ENCODE measurements at regions of chr17 and their contacts with region 1.

Region 1: GRCh38 chr17:21126645-21127510 is at the start of gene DHRS7B:
- DNase-seq: peak; percentile 97 to 98 (median 97)
- ATAC-seq: peak; percentile 92
- H3K4me3 ChIP-seq: peak within 1 kb of the TSS; percentile 83
- H3K27ac ChIP-seq: peak within 1 kb of the TSS; percentile 91
- H3K4me1 ChIP-seq: peaks cover 7 to 13% of the 10 kb centered on the region in 2 experiments; a peak in 3 of 5 replicates
- H3K27me3 ChIP-seq: no peaks in the 10 kb centered on the region
- CTCF ChIP-seq: peak in 1 of 3 experiments; percentile 3; a peak in 1 of 6 replicates
- EP300 ChIP-seq: peak; percentile 15; the same call in 1 of the 2 replicates
- POLR2A ChIP-seq: peak; percentile 86
- RAD21 ChIP-seq: no peak
- polyA plus RNA-seq, gene DHRS7B: 23.5 to 30.7 TPM

Region 2: GRCh38 chr17:21113716-21114115 is 13.2 kb before region 1 on chr17:
- CTCF ChIA-PET with region 1: no interaction called
- POLR2A ChIA-PET with region 1: no interaction called
- in situ Hi-C with region 1: no loop called
- intact Hi-C with region 1: no loop called
- DNase-seq: no peak
- ATAC-seq: no peak
- H3K4me3 ChIP-seq: no peak overlapping the region
- H3K27ac ChIP-seq: no peak overlapping the region
- H3K4me1 ChIP-seq: peaks cover 0 to under 1% of the 10 kb centered on the region in 2 experiments; a peak in 1 of 5 replicates
- H3K27me3 ChIP-seq: no peaks in the 10 kb centered on the region
- CTCF ChIP-seq: no peak
- EP300 ChIP-seq: no peak
- POLR2A ChIP-seq: no peak
- RAD21 ChIP-seq: no peak

Region 3: GRCh38 chr17:21214015-21214776 is 87.3 kb after region 1 on chr17 and contains the start of gene TMEM11:
- CTCF ChIA-PET with region 1: no interaction called
- POLR2A ChIA-PET with region 1: no interaction called
- in situ Hi-C with region 1: no loop called
- intact Hi-C with region 1: loop called (anchors 5 kb)
- DNase-seq: peak; percentile 88 to 93 (median 92)
- ATAC-seq: peak; percentile 94
- H3K4me3 ChIP-seq: peak within 1 kb of the TSS; percentile 96
- H3K27ac ChIP-seq: peak within 1 kb of the TSS; percentile 98
- H3K4me1 ChIP-seq: peaks cover 20 to 31% of the 10 kb centered on the region in 2 experiments; a peak in 4 of 5 replicates
- H3K27me3 ChIP-seq: no peaks in the 10 kb centered on the region
- CTCF ChIP-seq: peak in 1 of 3 experiments; percentile 1; a peak in 1 of 6 replicates
- EP300 ChIP-seq: no peak; the same call in 1 of the 2 replicates
- POLR2A ChIP-seq: peak; percentile 76
- RAD21 ChIP-seq: no peak
- polyA plus RNA-seq, gene TMEM11: 17.4 to 31.9 TPM

Region 4: GRCh38 chr17:21275579-21276263 is 148.8 kb after region 1 on chr17:
- CTCF ChIA-PET with region 1: no interaction called
- POLR2A ChIA-PET with region 1: no interaction called
- in situ Hi-C with region 1: no loop called
- intact Hi-C with region 1: loop called (anchors 1 kb)
- DNase-seq: peak; percentile 88 to 95 (median 93)
- ATAC-seq: peak; percentile 95
- H3K4me3 ChIP-seq: peak overlapping the region; percentile 44
- H3K27ac ChIP-seq: peak overlapping the region; percentile 31; the same call in 2 of the 3 replicates
- H3K4me1 ChIP-seq: peaks cover 28 to 51% of the 10 kb centered on the region in 2 experiments; a peak in 4 of 5 replicates
- H3K27me3 ChIP-seq: no peaks in the 10 kb centered on the region
- CTCF ChIP-seq: no peak
- EP300 ChIP-seq: no peak
- POLR2A ChIP-seq: peak; percentile 60
- RAD21 ChIP-seq: no peak

Region 5: DNA sequence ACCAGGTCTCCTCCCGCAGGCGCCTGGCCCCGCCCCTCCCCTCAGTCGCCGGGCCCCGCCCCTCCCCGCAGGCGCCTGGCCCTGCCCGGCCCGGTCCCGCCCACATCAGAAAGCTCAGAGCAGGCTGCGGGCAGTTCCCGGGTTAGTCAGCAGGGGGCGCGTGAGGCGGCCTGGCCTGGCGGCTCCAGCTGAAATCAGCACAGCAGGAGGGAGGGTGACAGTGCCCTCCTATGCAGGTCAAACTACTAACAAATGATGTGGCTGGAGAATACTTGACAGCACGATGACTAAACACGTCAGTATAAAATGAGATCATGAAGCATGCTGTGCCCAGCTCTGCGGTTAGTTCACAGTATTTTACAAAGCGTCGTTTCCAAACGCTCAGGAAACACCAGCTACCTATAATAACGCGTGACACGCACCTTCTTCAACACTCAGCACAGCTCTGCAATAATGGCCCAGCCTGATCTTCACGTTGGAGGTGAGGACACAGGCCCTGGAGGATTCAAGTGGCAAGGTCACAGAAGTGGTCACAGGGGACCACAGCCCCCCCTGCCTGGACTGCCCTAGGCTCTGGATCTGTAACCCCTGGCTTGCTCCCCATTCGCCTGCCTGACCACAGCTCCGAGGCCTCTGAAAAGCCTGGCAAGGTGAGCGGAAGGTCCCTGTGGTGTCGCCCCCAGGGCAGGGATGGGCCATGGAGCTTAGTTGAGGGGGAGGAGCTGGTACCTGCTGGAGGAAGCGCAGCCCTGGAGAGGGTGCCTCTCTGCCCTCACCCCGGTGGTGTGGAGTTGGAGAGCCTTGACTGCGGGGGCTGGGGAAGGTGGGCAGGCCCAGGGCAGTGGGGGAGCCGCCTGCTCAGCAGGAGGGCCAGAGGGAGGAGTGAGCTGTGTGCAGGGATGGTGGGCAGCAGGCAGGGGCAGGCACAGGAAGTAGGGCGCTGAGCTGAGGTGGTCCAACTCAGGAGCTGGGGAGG is 330.5 kb after region 1 on chr17:
- CTCF ChIA-PET with region 1: no interaction called
- POLR2A ChIA-PET with region 1: no interaction called
- in situ Hi-C with region 1: no loop called
- intact Hi-C with region 1: loop called (anchors 10 kb)
- DNase-seq: peak; percentile 87 to 95 (median 92)
- ATAC-seq: peak; percentile 99
- H3K4me3 ChIP-seq: no peak overlapping the region
- H3K27ac ChIP-seq: no peak overlapping the region
- H3K4me1 ChIP-seq: peaks cover 0 to 12% of the 10 kb centered on the region in 2 experiments; a peak in 4 of 5 replicates
- H3K27me3 ChIP-seq: peaks cover 0 to 6% of the 10 kb centered on the region in 2 experiments; a peak in 1 of 5 replicates
- CTCF ChIP-seq: peak; percentile 73 to 88 (median 80)
- EP300 ChIP-seq: no peak
- POLR2A ChIP-seq: no peak
- RAD21 ChIP-seq: peak; percentile 68 to 77

Region 6: DNA sequence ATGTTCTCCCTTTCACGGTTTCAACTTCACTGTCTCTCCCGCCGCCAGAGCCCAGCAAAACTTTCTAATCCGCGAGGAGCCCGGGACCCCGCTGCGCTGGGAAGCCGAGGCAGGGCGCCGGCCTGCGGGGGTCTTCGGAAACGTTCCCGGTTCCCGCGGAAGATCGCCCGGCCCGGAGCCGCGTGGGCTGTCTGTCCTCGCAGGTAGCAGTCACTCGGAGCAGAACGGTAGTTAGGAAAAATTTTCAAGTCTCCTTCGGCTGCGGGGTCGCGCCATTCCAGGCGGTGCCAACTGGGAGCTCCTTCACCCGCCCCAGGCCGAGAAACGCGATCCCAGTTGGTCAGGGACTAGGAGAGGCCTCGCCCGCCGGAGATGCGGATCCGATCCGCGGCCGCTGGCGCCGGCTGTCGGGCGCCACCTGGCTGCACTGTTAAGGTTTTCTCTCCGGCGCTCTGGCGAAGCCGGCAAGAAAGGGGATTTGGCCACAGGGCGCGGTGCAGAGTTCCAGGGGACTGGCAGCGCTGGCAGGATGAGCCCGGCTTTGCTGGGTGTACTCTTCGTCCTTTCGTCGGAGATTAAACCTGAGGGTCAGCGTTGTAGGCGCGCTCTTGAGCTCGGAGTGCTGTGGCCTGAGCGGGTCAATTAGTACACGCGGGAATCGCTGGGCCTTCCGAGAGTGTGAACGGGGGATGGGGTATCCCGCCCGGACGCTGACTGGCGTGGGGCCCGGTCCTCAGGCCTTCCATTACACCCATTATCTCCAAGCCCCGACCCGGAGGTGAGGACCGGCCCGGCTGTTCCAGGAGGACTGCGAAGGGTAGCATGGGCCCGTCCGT is 384.7 kb after region 1 on chr17:
- CTCF ChIA-PET with region 1: no interaction called
- POLR2A ChIA-PET with region 1: no interaction called
- in situ Hi-C with region 1: no loop called
- intact Hi-C with region 1: loop called (anchors 5 kb)
- DNase-seq: peak; percentile 46 to 73 (median 52)
- ATAC-seq: peak; percentile 96
- H3K4me3 ChIP-seq: peak overlapping the region; percentile 29
- H3K27ac ChIP-seq: no peak overlapping the region
- H3K4me1 ChIP-seq: peaks cover 0 to 15% of the 10 kb centered on the region in 2 experiments; a peak in 2 of 5 replicates
- H3K27me3 ChIP-seq: peaks cover 0 to under 1% of the 10 kb centered on the region in 2 experiments; a peak in 1 of 5 replicates
- CTCF ChIP-seq: peak; percentile 67 to 83 (median 68)
- EP300 ChIP-seq: no peak
- POLR2A ChIP-seq: no peak
- RAD21 ChIP-seq: peak; percentile 53 to 75